Left cardiac atrium (tissue), 4 donors: ENCODE measurements at regions of chr17 and their contacts with region 1.

Region 1: DNA sequence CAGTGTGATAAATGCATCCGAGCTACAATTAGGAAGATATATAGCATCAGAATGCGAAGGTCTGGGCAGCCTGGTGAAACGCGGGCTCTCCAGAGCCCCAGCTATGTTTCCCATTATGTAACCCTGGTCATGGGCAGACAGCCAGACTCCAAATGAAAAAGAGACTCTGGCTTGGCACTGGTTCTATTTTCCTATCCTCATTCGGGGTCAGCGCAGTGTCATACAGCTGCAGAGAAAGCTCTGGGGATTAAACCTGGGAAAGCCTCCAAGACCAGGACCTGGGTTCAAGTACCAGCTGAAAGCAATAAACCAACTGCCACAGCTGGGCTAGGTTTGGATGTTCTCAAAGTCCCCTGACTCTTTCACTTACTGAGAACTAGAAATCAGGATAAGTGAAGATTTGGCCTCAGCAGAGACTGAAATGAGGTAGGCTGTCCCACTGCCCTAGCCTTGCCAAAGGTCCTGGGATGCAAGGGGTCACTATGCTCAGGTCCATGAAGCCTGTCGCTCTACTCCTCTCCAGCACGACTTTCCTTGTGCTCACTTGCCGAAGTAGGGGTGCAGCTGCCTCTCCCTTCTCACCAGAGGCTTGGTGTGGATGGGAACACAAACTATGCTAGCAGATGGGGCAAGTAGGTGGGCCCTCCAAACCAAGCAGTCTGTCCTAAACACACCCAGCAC is 123.8 kb downstream of the SMG6 start:
- DNase-seq: peak; percentile 89
- ATAC-seq: peak; percentile 57 to 76

Region 2: GRCh38 chr17:2064980-2065785 is 114.6 kb before region 1 on chr17:
- intact Hi-C with region 1: loop called in 1 of 2 experiments (anchors 5 kb)
- DNase-seq: no peak
- ATAC-seq: peak in 1 of 2 donors; percentile 9

Region 3: DNA sequence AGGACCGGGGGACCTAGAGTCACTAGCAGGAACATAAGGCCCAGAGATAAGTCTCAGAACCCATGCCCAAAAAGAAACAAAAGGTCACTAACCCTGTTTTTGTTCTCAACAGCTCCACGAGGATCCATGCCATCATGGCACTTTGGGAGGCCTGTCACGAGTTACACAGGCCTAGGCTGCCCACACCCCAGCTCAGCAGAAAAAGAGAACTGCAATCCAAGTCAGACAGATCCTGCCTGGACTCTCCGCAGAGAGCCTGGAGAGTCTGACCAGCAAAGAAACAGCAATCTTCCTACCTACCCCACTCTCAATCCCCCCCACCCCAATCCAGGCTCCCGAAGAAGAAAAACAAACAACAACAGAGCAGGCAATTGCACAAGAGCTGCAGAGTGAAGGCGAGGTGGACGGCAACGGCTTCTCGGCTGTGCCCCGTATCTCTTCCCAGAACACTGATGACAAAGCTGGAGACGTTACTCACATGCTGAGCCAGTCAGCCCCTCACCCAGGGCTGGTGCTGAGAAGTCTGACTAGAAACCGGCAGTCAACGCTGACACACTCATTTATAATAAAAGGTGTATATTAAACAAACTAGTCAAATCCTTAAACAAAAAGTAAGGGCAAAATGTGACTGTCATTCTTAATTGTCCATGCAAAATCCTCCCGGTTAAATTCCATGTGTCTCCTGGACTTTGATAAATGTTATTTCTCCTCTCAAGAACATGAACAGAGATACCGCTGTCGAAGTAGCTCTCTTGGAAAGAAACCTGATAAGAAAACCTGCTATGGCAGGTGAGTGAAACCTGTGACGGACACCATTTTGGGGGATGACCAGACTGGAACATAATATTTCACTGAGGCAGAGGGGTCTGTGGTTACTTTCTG is 34.5 kb after region 1 on chr17:
- intact Hi-C with region 1: loop called in 1 of 2 experiments (anchors 5 kb)
- DNase-seq: peak; percentile 78
- ATAC-seq: peak; percentile 46 to 84